ENCODE measurements at regions of chr6 and their contacts with region 1.

Region 1: GRCh38 chr6:70686548-70687133 is 19.0 kb downstream of the SMAP1 start:
- DNase-seq: no peak
- H3K4me3 ChIP-seq: no peak overlapping the region
- CTCF ChIP-seq: peak; percentile 31

Region 2: GRCh38 chr6:70547313-70547712 is 139.3 kb before region 1 on chr6:
- CTCF ChIA-PET with region 1: interaction called, 21 read pairs
- POLR2A ChIA-PET with region 1: no interaction called
- DNase-seq: no peak
- H3K4me3 ChIP-seq: no peak overlapping the region
- CTCF ChIP-seq: peak; percentile 38

Region 3: GRCh38 chr6:70625436-70625835 is 61.2 kb before region 1 on chr6:
- CTCF ChIA-PET with region 1: no interaction called
- POLR2A ChIA-PET with region 1: no interaction called
- DNase-seq: no peak
- H3K4me3 ChIP-seq: no peak overlapping the region
- CTCF ChIP-seq: no peak

Region 4: DNA sequence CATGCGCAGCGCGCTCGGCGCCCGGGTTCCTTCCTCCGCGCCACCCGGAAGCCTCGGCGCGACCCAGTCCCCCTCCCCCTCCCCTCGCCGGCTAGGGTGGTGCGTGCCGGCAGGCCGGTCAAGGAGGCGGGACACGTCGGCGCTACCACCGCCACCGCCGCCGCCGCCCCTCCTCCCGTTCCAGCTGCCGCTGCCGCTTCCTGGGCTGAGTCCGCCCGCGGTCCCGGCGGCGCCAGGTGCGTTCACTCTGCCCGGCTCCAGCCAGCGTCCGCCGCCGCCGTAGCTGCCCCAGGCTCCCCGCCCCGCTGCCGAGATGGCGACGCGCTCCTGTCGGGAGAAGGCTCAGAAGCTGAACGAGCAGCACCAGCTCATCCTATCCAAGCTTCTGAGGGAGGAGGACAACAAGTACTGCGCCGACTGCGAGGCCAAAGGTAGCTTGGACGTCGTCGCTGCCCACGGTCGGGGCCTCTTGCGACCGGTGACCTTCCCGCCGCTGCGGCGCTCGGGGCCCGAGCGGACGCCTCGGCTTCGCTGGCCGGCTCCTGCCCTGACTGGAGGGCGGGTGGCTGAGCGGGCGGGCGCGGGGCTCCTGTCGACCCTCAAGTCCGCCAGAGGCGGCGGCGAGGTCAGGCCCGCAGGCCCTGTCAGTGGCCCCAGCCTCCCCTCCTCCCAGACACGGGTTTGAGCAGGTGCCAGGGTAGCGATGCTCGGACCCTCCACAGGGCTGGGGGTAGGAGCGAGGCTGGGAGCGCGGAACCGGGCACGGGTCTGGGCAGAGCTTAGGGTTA is 18.7 kb before region 1 on chr6 and contains the start of gene SMAP1:
- CTCF ChIA-PET with region 1: interaction called, 24 read pairs
- POLR2A ChIA-PET with region 1: interaction called, 3 read pairs
- DNase-seq: peak; percentile 7
- H3K4me3 ChIP-seq: peak within 1 kb of the TSS; percentile 91
- CTCF ChIP-seq: no peak

Region 5: GRCh38 chr6:70700922-70701876 is 14.6 kb after region 1 on chr6:
- CTCF ChIA-PET with region 1: interaction called, 13 read pairs
- POLR2A ChIA-PET with region 1: no interaction called
- DNase-seq: no peak
- H3K4me3 ChIP-seq: no peak overlapping the region
- CTCF ChIP-seq: no peak

Measured in AG04449 (cell line).